ENCODE measurements at regions of chr1 and their contacts with region 1.

Region 1: DNA sequence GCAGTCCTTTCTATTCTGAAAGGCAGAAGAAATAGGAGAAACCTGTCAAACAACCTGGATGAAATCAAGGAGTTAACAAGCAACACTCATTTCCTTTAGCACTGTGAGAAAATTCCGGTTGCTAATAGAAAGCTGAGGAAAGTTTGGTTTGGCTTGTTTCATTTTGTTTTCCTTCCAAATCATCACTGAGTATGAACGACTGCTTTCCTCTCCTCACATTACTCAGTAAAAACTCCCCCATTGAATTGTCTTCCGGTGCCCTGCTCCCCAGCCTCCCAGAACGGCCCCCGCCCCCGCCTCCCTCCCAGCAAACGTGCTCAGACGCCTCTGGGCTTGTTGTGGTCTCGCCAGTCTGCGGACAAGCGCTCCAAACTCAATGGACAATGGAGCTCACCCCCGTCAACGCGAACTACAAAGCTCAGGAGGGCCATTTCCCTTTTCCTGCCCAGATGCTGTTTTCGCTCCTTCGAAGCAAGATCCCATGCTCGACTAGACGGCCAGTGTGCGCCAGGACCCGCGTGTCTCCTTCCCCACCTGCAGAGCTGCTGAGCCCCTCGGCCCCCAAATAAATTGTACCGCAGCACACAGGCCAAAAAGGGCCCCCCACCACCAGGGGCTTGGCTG is 747 bp downstream of the STX6 start:
- DNase-seq: peak; percentile 12 to 67 (median 33)
- ATAC-seq: peak; percentile 21
- H3K4me3 ChIP-seq: peak overlapping the region; percentile 84
- H3K4me3 Mint-ChIP-seq: peak overlapping the region; percentile 92 to 98 (median 94)
- H3K27ac ChIP-seq: peak overlapping the region; percentile 84
- H3K27ac Mint-ChIP-seq: peak overlapping the region; percentile 93 to 100 (median 97)
- H3K4me1 ChIP-seq: peaks cover 21 to 22% of the 10 kb centered on the region in 2 donors
- H3K4me1 Mint-ChIP-seq: peaks cover 17 to 59% (median 48%) of the 10 kb centered on the region in 7 donors
- H3K27me3 ChIP-seq: no peaks in the 10 kb centered on the region
- H3K27me3 Mint-ChIP-seq: peaks cover 0 to 25% (median 0%) of the 10 kb centered on the region in 5 donors

Region 2: DNA sequence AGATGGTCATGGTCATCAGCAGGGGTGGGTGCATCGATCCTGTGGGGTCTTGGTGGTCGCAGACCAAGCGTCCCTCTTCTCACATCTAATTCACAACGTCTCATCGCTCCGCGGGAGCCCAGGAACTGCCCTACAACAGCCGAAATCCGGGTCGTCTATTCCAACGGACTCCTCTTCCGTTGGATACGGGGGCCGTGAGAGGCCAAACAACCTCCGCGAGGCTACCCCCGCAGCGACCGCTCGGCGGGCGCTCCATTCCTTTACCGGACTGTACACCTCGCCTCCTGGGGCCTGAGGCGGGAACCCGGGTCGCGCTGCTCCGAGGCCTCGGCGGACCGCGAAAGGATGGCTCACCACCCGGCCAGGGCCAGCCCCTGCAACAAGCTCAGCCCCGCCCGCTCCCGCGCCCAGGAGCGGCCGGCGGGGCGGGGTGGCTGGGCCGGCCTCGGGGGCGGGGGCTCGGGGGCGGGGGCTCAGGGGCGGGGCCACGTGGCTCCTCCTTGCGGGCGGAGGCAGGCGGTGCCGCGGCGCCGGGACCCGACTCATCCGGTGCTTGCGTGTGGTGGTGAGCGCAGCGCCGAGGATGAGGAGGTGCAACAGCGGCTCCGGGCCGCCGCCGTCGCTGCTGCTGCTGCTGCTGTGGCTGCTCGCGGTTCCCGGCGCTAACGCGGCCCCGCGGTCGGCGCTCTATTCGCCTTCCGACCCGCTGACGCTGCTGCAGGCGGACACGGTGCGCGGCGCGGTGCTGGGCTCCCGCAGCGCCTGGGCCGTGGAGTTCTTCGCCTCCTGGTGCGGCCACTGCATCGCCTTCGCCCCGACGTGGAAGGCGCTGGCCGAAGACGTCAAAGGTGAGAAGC is 867.4 kb before region 1 on chr1 and contains the start of gene QSOX1:
- CTCF ChIA-PET with region 1: no interaction called
- POLR2A ChIA-PET with region 1: no interaction called
- intact Hi-C with region 1: loop called in 1 of 2 experiments (anchors 5 kb)
- DNase-seq: peak; percentile 81 to 89 (median 86)
- ATAC-seq: peak; percentile 97
- H3K4me3 ChIP-seq: peak within 1 kb of the TSS; percentile 94
- H3K4me3 Mint-ChIP-seq: peak within 1 kb of the TSS; percentile 80 to 99 (median 91)
- H3K27ac ChIP-seq: peak within 1 kb of the TSS; percentile 78
- H3K27ac Mint-ChIP-seq: peak within 1 kb of the TSS; percentile 81 to 95 (median 86)
- H3K4me1 ChIP-seq: peaks cover 7 to 20% of the 10 kb centered on the region in 2 donors
- H3K4me1 Mint-ChIP-seq: peaks cover 24 to 45% (median 37%) of the 10 kb centered on the region in 7 donors
- H3K27me3 ChIP-seq: no peaks in the 10 kb centered on the region
- H3K27me3 Mint-ChIP-seq: no peaks in the 10 kb centered on the region
- total RNA-seq, gene QSOX1: 22.1 to 55.6 (median 25.6) TPM

Region 3: DNA sequence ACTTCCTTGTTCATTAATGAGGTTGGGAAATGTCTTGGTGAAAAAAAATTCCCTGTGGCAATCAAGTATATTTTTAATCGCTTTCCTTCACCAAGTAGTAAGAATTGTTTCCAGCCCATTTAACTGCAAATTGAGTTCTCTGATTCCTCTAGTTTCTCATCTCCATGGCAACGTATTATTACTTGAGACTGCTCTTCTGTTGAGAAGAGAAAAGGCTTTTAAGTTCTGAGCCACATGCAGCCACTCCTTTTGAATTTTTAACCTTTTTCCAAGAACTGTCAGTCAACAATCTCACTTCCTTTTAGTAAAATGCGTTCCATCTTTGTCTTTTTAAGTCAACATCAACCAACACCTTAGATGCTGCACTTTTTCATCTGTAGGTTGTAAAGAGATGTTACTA is 184.9 kb before region 1 on chr1:
- CTCF ChIA-PET with region 1: no interaction called
- POLR2A ChIA-PET with region 1: no interaction called
- intact Hi-C with region 1: loop called in 1 of 2 experiments (anchors 5 kb)
- DNase-seq: peak in 5 of 9 donors; percentile 1 to 37 (median 19)
- ATAC-seq: no peak
- H3K4me3 ChIP-seq: no peak overlapping the region
- H3K4me3 Mint-ChIP-seq: peak overlapping the region in 8 of 10 donors; percentile 16 to 77 (median 58)
- H3K27ac ChIP-seq: no peak overlapping the region
- H3K27ac Mint-ChIP-seq: peak overlapping the region in 7 of 9 donors; percentile 17 to 86 (median 66)
- H3K4me1 ChIP-seq: no peaks in the 10 kb centered on the region
- H3K4me1 Mint-ChIP-seq: peaks cover 8 to 29% (median 22%) of the 10 kb centered on the region in 7 donors
- H3K27me3 ChIP-seq: no peaks in the 10 kb centered on the region
- H3K27me3 Mint-ChIP-seq: no peaks in the 10 kb centered on the region

Region 4: GRCh38 chr1:180981596-180982387 is 40.1 kb before region 1 on chr1:
- CTCF ChIA-PET with region 1: no interaction called
- POLR2A ChIA-PET with region 1: no interaction called
- intact Hi-C with region 1: loop called (anchors 1 to 5 kb)
- DNase-seq: peak in 8 of 9 donors; percentile 32 to 62 (median 55)
- ATAC-seq: peak; percentile 85
- H3K4me3 ChIP-seq: no peak overlapping the region
- H3K4me3 Mint-ChIP-seq: peak overlapping the region in 9 of 10 donors; percentile 15 to 79 (median 34)
- H3K27ac ChIP-seq: peak overlapping the region; percentile 34
- H3K27ac Mint-ChIP-seq: peak overlapping the region; percentile 22 to 78 (median 65)
- H3K4me1 ChIP-seq: peaks cover 5 to 11% of the 10 kb centered on the region in 2 donors
- H3K4me1 Mint-ChIP-seq: peaks cover 12 to 45% (median 30%) of the 10 kb centered on the region in 7 donors
- H3K27me3 ChIP-seq: no peaks in the 10 kb centered on the region
- H3K27me3 Mint-ChIP-seq: no peaks in the 10 kb centered on the region

Region 5: GRCh38 chr1:181033799-181034451 is 12.0 kb after region 1 on chr1 and contains the start of gene MR1:
- CTCF ChIA-PET with region 1: interaction called, 14 read pairs
- POLR2A ChIA-PET with region 1: interaction called, 64 read pairs
- intact Hi-C with region 1: loop called (anchors 1 kb)
- DNase-seq: peak in 8 of 9 donors; percentile 32 to 92 (median 88)
- ATAC-seq: peak; percentile 97
- H3K4me3 ChIP-seq: peak within 1 kb of the TSS; percentile 77
- H3K4me3 Mint-ChIP-seq: peak within 1 kb of the TSS; percentile 84 to 99 (median 97)
- H3K27ac ChIP-seq: peak within 1 kb of the TSS; percentile 95
- H3K27ac Mint-ChIP-seq: peak within 1 kb of the TSS; percentile 95 to 100 (median 98)
- H3K4me1 ChIP-seq: peaks cover 32 to 42% of the 10 kb centered on the region in 2 donors
- H3K4me1 Mint-ChIP-seq: peaks cover 39 to 69% (median 61%) of the 10 kb centered on the region in 7 donors
- H3K27me3 ChIP-seq: no peaks in the 10 kb centered on the region
- H3K27me3 Mint-ChIP-seq: peaks cover 0 to 6% (median 0%) of the 10 kb centered on the region in 5 donors
- total RNA-seq, gene MR1: 19.8 to 35.8 (median 29.7) TPM

Region 6: GRCh38 chr1:181062836-181063428 is 41.0 kb after region 1 on chr1:
- CTCF ChIA-PET with region 1: no interaction called
- POLR2A ChIA-PET with region 1: no interaction called
- intact Hi-C with region 1: no loop called
- DNase-seq: peak in 3 of 9 donors; percentile 19 to 42 (median 30)
- ATAC-seq: peak; percentile 81
- H3K4me3 ChIP-seq: peak overlapping the region; percentile 33
- H3K4me3 Mint-ChIP-seq: peak overlapping the region; percentile 59 to 81 (median 74)
- H3K27ac ChIP-seq: no peak overlapping the region
- H3K27ac Mint-ChIP-seq: peak overlapping the region; percentile 43 to 95 (median 85)
- H3K4me1 ChIP-seq: peaks cover 6 to 8% of the 10 kb centered on the region in 2 donors
- H3K4me1 Mint-ChIP-seq: peaks cover 14 to 26% (median 22%) of the 10 kb centered on the region in 7 donors
- H3K27me3 ChIP-seq: no peaks in the 10 kb centered on the region
- H3K27me3 Mint-ChIP-seq: no peaks in the 10 kb centered on the region

Region 7: DNA sequence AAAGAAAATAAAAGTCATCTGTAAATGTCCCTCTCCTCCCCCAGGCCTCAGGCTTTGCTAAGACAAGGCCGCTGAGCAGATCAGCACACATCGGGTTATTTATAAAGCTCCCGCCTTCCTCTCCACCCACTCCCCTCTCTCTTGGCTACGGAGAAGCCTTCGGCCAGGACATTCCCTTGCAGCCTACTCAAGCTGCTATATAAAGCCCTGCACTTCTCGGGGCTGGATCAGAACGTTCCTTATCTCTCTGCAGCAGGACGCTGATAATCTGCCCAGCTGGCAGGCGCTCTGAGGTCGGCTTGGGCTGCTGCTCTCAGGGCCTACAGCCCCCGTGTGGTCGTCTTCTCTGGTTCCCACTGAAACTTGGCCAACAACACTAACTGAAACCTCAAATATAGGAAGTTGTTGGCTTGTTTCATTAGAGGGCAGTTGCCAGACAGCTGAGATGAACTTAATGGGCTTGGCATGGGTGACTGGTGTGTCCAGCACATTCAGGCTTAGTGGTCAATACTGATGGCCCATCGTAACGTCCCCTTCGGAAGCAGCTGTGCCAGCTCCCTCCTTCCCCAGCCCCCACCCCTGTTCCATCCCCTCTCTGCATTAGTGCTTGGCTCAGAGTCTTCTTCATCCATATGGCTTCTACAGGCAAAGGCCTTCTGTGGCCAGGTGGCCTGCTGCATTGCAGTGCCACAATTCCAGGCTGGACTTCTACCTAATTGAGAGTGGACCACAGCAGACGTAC is 131.1 kb after region 1 on chr1:
- CTCF ChIA-PET with region 1: interaction called, 5 read pairs
- POLR2A ChIA-PET with region 1: interaction called, 11 read pairs
- intact Hi-C with region 1: no loop called
- DNase-seq: no peak
- ATAC-seq: peak; percentile 58
- H3K4me3 ChIP-seq: no peak overlapping the region
- H3K4me3 Mint-ChIP-seq: no peak overlapping the region
- H3K27ac ChIP-seq: no peak overlapping the region
- H3K27ac Mint-ChIP-seq: peak overlapping the region in 1 of 9 donors; percentile 44
- H3K4me1 ChIP-seq: peaks cover 36 to 49% of the 10 kb centered on the region in 2 donors
- H3K4me1 Mint-ChIP-seq: peaks cover 37 to 75% (median 63%) of the 10 kb centered on the region in 7 donors
- H3K27me3 ChIP-seq: no peaks in the 10 kb centered on the region
- H3K27me3 Mint-ChIP-seq: peaks cover 0 to 27% (median 0%) of the 10 kb centered on the region in 5 donors

Region 8: DNA sequence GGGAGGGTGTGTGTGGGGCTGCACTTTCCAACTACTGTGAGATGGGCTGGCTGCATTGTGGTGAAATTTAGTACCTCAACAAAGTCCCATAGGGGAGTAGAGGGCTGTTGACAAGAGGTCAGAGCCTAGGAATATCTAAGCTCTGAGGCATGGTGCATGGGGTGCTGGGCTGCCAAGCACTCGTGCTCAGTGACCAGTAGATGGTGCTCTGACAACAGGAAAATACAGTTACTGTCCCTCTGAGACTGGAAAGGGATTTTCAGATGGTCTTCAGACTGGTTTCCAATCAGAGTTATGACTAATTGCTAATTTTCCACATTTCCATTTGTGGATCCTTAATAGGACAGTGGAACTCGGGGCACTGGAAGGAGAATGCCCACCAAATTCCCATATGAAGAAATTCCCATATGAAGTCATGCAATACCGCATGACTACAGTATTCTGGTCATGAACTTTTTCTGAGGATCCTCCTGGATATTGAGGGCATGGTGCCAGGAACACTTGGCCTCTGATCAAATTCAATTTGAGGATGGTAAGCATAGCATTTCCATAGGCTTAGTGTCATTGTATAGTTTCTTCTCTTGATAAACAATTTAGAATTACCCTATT is 457.3 kb after region 1 on chr1:
- CTCF ChIA-PET with region 1: no interaction called
- POLR2A ChIA-PET with region 1: no interaction called
- intact Hi-C with region 1: no loop called
- DNase-seq: peak in 5 of 9 donors; percentile 25 to 40 (median 26)
- ATAC-seq: peak; percentile 64
- H3K4me3 ChIP-seq: no peak overlapping the region
- H3K4me3 Mint-ChIP-seq: no peak overlapping the region
- H3K27ac ChIP-seq: no peak overlapping the region
- H3K27ac Mint-ChIP-seq: no peak overlapping the region
- H3K4me1 ChIP-seq: no peaks in the 10 kb centered on the region
- H3K4me1 Mint-ChIP-seq: peaks cover 9 to 16% (median 12%) of the 10 kb centered on the region in 7 donors
- H3K27me3 ChIP-seq: peaks cover 0 to 5% of the 10 kb centered on the region in 2 donors
- H3K27me3 Mint-ChIP-seq: peaks cover 34 to 58% (median 46%) of the 10 kb centered on the region in 5 donors